ENCODE measurements at regions of chr5 and their contacts with region 1.

Region 1: DNA sequence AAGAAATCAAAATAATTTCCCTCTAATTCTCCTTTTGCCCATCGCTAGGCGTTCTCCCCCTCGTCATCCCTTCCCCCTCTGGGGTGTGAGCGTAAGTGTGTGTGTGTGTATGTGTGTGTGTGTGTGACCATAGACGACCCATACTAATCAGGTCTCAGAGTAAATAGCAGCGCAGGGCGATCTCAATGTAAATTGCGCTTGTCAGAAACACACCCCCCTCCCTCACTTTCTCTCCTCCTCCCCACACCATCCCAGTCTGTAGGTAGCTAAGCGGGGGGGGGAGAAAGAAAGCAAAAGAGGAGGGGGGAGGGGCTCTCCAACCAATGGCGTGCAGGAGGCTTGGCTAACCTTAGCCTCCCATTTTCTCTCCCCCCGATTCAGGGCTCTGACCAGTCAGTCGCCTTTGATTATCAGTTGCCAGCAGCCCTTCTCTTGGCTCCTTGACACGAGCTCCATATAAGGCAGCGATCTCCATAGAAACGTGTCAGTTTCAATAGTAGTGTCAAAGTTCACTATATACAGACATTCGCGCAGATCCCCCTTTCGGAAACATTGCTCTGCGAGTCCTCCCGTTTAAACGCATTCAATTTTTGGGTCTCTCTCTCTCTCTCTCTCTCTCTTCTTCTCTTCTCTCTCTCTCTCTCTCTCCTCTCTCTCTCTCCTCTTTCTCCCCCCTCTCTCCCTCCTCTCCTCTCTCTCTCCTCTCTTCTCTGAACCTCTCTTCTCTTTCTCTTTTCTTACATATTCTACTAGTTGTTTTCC is at the start of gene NR2F1:
- DNase-seq: peak; percentile 92
- H3K4me3 ChIP-seq: peak within 1 kb of the TSS; percentile 62 to 76 (median 67)
- H3K27ac ChIP-seq: peak within 1 kb of the TSS; percentile 38
- H3K4me1 ChIP-seq: peaks cover 18% of the 10 kb centered on the region
- H3K27me3 ChIP-seq: no peaks in the 10 kb centered on the region
- CTCF ChIP-seq: no peak
- total RNA-seq, gene NR2F1: 3.3 to 3.5 TPM

Region 2: DNA sequence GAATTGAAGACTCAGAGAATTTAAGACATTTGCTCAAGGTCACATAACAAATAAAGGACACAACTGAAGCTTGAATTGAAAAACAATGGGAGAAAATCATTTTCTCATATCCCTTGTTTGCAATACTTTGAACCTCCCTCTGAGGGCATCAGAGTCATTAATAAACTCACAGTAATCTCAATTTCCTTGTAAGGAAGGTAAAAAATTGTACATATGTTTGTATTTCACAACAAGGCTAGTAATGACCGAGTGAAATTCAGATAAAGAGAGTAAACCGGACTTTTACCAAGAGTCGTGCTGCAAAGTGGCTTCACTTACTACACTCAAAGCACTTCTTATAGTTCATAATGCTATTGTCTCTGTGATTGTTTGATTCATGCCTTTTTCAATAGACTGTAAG is 666.8 kb before region 1 on chr5:
- CTCF ChIA-PET with region 1: no interaction called
- dilution Hi-C with region 1: no loop called
- in situ Hi-C with region 1: loop called in 1 of 2 experiments (anchors 25 kb)
- intact Hi-C with region 1: loop called (anchors 1 kb)
- DNase-seq: peak; percentile 6
- H3K4me3 ChIP-seq: no peak overlapping the region
- H3K27ac ChIP-seq: no peak overlapping the region
- H3K4me1 ChIP-seq: no peaks in the 10 kb centered on the region
- H3K27me3 ChIP-seq: no peaks in the 10 kb centered on the region
- CTCF ChIP-seq: peak; percentile 17 to 34

Region 3: GRCh38 chr5:93189707-93190120 is 393.1 kb before region 1 on chr5:
- CTCF ChIA-PET with region 1: no interaction called
- dilution Hi-C with region 1: no loop called
- in situ Hi-C with region 1: no loop called
- intact Hi-C with region 1: loop called (anchors 5 kb)
- DNase-seq: peak; percentile 98
- H3K4me3 ChIP-seq: no peak overlapping the region
- H3K27ac ChIP-seq: peak overlapping the region; percentile 18
- H3K4me1 ChIP-seq: peaks cover 61% of the 10 kb centered on the region
- H3K27me3 ChIP-seq: no peaks in the 10 kb centered on the region
- CTCF ChIP-seq: no peak

Region 4: GRCh38 chr5:93735378-93735777 is 152.5 kb after region 1 on chr5:
- CTCF ChIA-PET with region 1: no interaction called
- dilution Hi-C with region 1: no loop called
- in situ Hi-C with region 1: no loop called
- intact Hi-C with region 1: no loop called
- DNase-seq: no peak
- H3K4me3 ChIP-seq: no peak overlapping the region
- H3K27ac ChIP-seq: no peak overlapping the region
- H3K4me1 ChIP-seq: no peaks in the 10 kb centered on the region
- H3K27me3 ChIP-seq: no peaks in the 10 kb centered on the region
- CTCF ChIP-seq: no peak

Region 5: DNA sequence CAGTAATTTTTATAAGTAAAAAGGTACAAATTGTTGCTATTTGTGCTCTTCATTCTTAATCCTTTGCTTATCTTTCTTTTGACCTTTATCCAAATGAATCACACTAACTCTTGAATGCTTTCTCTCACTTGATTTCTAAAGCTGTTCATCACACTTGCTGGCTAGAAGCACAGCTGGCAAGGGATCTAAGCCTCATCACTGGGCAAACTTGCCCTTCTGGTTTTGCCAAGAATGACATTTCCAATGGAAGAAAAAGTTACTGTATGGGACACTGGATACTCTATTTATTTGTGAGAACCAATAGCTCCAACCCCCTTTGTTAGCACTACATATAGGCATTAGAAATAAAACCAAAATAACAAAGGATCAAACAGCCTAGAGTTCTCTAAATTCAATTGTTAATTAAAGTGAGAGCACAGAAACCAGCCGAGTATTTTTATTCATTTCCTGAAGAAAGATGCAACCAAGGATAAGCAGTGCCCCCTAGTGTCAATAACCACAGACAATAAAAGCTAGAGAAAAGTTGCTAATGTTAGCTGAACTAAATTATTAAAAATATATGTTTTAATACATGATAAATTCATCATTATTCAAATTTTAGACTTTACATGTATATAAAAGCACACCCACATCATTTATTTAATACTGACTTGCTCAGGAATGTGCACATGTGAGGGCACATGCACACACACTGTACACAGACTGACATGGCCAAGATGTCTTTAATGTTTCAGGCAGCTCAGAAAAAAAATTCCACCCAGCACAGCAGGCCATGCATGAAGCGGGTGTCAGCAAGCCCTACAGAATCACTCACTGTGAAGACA is 218.3 kb after region 1 on chr5:
- CTCF ChIA-PET with region 1: no interaction called
- dilution Hi-C with region 1: no loop called
- in situ Hi-C with region 1: no loop called
- intact Hi-C with region 1: loop called (anchors 1 kb)
- DNase-seq: peak; percentile 65
- H3K4me3 ChIP-seq: peak overlapping the region in 1 of 3 experiments; percentile 19
- H3K27ac ChIP-seq: no peak overlapping the region
- H3K4me1 ChIP-seq: peaks cover 4% of the 10 kb centered on the region
- H3K27me3 ChIP-seq: no peaks in the 10 kb centered on the region
- CTCF ChIP-seq: peak; percentile 54 to 66

Region 6: GRCh38 chr5:93915142-93915553 is 332.3 kb after region 1 on chr5:
- CTCF ChIA-PET with region 1: no interaction called
- dilution Hi-C with region 1: no loop called
- in situ Hi-C with region 1: no loop called
- intact Hi-C with region 1: loop called (anchors 1 kb)
- DNase-seq: peak; percentile 33
- H3K4me3 ChIP-seq: no peak overlapping the region
- H3K27ac ChIP-seq: no peak overlapping the region
- H3K4me1 ChIP-seq: no peaks in the 10 kb centered on the region
- H3K27me3 ChIP-seq: no peaks in the 10 kb centered on the region
- CTCF ChIP-seq: peak; percentile 47 to 48

Measured in mammary epithelial cell (primary cell).